ENCODE measurements at regions of chr1 and their contacts with region 1.

Region 1: DNA sequence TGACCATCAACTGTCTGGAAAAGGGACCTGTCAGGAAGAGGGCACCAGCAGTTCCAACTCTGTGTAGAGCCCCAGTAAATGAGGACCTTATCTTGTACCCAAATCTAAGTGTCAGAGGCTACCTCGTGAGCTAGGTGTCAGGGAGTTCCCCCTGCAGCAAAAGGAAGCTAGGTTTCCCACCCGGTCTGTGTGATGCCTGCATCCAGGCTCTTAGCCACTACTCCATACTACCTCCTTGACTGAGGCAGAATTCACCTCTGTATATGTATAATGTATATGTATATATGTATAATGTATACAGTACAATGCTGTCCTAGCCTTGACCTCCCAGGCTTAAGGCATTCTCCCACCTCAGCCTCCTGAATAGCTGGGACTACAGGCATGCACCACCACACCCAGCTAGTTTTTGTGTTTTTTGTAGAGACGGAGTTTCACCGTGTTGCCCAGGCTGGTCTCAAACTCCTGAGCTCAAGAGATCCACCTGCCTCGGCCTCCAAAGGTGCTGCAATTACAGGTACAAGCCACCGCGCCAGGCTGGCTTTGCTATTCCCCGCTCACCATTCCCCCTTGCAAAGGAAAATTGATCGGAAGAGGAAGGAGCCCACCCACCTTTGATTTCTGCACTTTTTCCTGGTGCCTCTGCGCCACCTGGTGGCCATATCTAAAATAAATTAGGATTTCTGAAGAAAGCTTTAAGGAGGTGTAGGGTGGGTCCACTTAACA is 15.7 kb upstream of the LUZP1 start:
- DNase-seq: no peak
- H3K4me3 Mint-ChIP-seq: peak overlapping the region; percentile 37
- H3K27ac Mint-ChIP-seq: no peak overlapping the region
- H3K4me1 Mint-ChIP-seq: peaks cover 4% of the 10 kb centered on the region
- H3K27me3 Mint-ChIP-seq: peaks cover 10% of the 10 kb centered on the region

Region 2: GRCh38 chr1:22976461-22977243 is 207.7 kb before region 1 on chr1:
- intact Hi-C with region 1: loop called (anchors 1 kb)
- DNase-seq: peak; percentile 34
- H3K4me3 Mint-ChIP-seq: no peak overlapping the region
- H3K27ac Mint-ChIP-seq: no peak overlapping the region
- H3K4me1 Mint-ChIP-seq: peaks cover 3% of the 10 kb centered on the region
- H3K27me3 Mint-ChIP-seq: peaks cover 11% of the 10 kb centered on the region